GM23248 (cell line): ENCODE measurements at regions of chr9 and their contacts with region 1.

Region 1: DNA sequence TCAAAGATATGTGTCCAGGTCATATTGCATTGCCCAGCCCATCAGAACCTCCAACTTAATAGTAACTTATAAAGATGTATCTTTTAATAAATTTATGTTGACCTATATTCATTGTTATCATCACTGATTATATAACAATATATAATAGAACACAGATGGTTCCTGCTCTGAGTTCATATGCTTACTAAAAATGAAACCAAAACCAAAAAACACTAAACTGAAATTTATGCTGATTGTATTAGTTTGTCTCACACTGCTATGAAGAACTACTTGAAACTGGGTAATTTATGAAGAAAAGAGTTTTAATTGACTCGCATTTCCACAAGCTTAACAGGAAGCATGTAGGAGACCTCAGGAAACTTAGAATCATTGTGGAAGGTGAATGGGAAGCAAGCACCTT is 462.5 kb upstream of the TYRP1 start:
- DNase-seq: no peak
- H3K4me3 ChIP-seq: no peak overlapping the region
- H3K27ac ChIP-seq: no peak overlapping the region
- H3K4me1 ChIP-seq: no peaks in the 10 kb centered on the region
- H3K27me3 ChIP-seq: no peaks in the 10 kb centered on the region

Region 2: GRCh38 chr9:12141422-12141821 is 89.3 kb before region 1 on chr9:
- in situ Hi-C with region 1: loop called (anchors 25 kb)
- DNase-seq: no peak
- H3K4me3 ChIP-seq: no peak overlapping the region
- H3K27ac ChIP-seq: no peak overlapping the region
- H3K4me1 ChIP-seq: no peaks in the 10 kb centered on the region
- H3K27me3 ChIP-seq: no peaks in the 10 kb centered on the region

Region 3: GRCh38 chr9:12290166-12290869 is 59.6 kb after region 1 on chr9:
- in situ Hi-C with region 1: no loop called
- DNase-seq: no peak
- H3K4me3 ChIP-seq: no peak overlapping the region
- H3K27ac ChIP-seq: no peak overlapping the region
- H3K4me1 ChIP-seq: no peaks in the 10 kb centered on the region
- H3K27me3 ChIP-seq: no peaks in the 10 kb centered on the region